ENCODE measurements at regions of chr10 and their contacts with region 1.

Region 1: DNA sequence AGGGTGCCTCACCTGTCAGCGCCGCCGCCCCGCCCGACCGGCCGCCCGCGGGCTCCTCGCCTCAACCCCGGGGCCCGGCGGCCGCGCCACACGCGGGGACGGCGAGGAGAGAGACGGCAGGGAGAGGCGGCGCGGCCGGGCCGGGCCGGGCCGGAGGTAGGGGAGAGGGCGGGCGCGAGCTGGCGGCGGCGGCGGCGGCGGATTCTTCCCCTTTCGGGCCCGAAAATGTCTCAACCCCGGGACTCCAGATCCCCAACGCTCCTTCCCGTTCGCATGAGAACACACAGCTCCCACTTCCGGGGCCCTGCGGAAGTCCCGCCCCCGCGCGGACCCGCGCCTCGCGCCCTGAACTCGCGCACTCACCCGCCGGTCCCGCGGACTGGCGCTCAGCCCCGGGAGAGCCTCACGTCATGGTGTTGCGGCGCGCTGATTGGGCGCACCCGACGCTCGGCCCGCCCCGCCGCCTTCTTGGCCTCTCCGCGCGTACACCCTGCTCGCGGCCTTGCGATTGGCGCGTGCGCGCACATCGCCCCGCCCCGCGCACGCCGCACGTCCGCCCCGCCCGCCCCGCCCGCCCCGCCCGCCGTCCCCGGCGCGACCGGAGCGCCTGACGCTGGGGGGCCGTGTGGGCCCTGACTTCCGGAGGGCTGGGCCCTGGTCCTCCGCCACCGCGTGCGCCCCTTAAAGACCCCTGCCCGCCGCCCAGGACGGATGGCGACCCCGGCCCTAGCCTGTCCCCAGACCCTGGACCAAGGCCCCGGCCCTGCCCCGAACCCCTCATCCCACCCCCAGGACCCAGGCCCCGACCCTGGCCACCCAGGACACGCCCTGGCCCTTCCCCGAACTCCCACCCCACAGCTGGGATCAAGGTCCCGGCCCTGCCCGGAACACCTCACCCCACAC is at the start of gene LARP4B:
- DNase-seq: peak; percentile 93
- ATAC-seq: peak; percentile 89
- H3K4me3 ChIP-seq: peak within 1 kb of the TSS; percentile 83 to 88 (median 88)
- H3K27ac ChIP-seq: peak within 1 kb of the TSS; percentile 76
- H3K4me1 ChIP-seq: peaks cover 71% of the 10 kb centered on the region
- H3K27me3 ChIP-seq: peaks cover 0 to 3% of the 10 kb centered on the region in 2 experiments; a peak in 1 of 5 replicates
- CTCF ChIP-seq: no peak
- EP300 ChIP-seq: no peak
- POLR2A ChIP-seq: peak; percentile 58 to 61
- RAD21 ChIP-seq: no peak
- total RNA-seq, gene LARP4B: 19.5 and 23.6 TPM in 2 replicates

Region 2: GRCh38 chr10:970311-971149 is 38.9 kb after region 1 on chr10:
- CTCF ChIA-PET with region 1: no interaction called
- POLR2A ChIA-PET with region 1: interaction called, 8 read pairs
- in situ Hi-C with region 1: no loop called
- intact Hi-C with region 1: loop called (anchors 2 kb)
- DNase-seq: peak; percentile 93
- ATAC-seq: peak; percentile 81
- H3K4me3 ChIP-seq: peak overlapping the region; percentile 35 to 56 (median 44)
- H3K27ac ChIP-seq: peak overlapping the region; percentile 68
- H3K4me1 ChIP-seq: peaks cover 68% of the 10 kb centered on the region
- H3K27me3 ChIP-seq: peaks cover 0 to 35% of the 10 kb centered on the region in 2 experiments; a peak in 3 of 5 replicates
- CTCF ChIP-seq: no peak
- EP300 ChIP-seq: peak in 1 of 2 experiments; percentile 74; a peak in 2 of 4 replicates
- POLR2A ChIP-seq: no peak
- RAD21 ChIP-seq: no peak

Region 3: DNA sequence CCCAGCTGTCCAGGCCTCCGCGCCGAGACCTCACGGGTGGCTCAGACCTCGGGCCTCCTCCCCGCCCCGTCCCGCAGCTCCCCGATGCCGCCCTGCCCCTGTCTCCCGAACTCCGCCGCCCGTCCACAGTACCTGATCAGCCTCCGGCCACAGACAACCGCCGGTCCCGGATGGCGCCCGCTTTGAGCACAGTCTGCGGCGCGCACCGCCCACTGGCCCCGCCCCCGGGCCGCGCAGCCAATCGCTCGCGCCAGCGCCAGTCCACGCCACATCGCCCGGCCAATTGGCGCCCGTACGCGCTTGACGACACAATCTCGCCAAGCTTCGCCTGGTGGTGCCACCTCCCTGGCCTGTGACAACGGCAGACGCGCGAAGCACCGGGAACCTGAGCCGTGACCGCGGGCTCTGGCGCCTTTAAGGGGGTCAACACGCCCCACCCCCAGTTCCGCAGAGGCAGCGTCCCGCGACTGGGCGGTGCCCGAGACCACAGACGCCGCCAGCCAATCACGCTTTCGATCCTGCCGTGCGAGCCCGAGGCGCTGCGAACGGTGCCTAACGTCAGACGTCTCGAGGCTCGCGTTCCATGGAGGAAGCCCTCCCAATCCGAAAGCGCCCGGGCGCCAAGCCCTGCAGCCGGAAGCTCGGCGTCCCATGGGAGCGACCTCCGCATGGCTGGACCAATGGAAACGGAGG is 117.2 kb after region 1 on chr10 and contains the start of gene IDI1:
- CTCF ChIA-PET with region 1: no interaction called
- POLR2A ChIA-PET with region 1: interaction called, 15 read pairs
- in situ Hi-C with region 1: no loop called
- intact Hi-C with region 1: loop called (anchors 2 kb)
- DNase-seq: peak; percentile 96
- ATAC-seq: peak; percentile 92
- H3K4me3 ChIP-seq: peak within 1 kb of the TSS; percentile 80 to 98 (median 93)
- H3K27ac ChIP-seq: peak within 1 kb of the TSS; percentile 96
- H3K4me1 ChIP-seq: peaks cover 59% of the 10 kb centered on the region
- H3K27me3 ChIP-seq: no peaks in the 10 kb centered on the region; a peak in 1 of 5 replicates
- CTCF ChIP-seq: no peak
- EP300 ChIP-seq: peak in 1 of 2 experiments; percentile 61; a peak in 2 of 4 replicates
- POLR2A ChIP-seq: peak; percentile 93 to 97
- RAD21 ChIP-seq: no peak
- total RNA-seq, gene IDI1: 145 and 247 TPM in 2 replicates

Measured in HepG2 (cell line).